ENCODE measurements at regions of chr3 and their contacts with region 1.

Region 1: DNA sequence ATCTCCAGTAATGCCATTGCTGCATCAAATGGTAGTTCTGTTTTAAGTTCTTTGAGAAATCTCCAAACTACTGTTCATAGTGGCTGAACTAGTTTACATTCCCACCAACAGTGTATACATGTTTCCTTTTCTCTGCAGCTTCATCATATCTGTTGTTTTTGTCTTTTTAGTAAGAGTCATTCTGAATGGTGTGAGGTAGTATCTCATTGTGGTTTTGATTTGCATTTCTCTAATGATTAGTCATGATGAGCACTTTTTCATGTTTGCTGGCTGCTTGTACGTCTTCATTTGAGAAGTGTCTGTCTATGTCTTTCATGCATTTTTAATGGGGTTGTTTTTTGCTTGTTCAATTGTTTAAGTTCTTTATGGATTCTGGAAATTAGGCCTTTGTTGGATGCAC is 10.2 kb upstream of the GCSAM start:
- DNase-seq: no peak
- H3K4me3 ChIP-seq: no peak overlapping the region
- H3K27ac ChIP-seq: no peak overlapping the region
- H3K4me1 ChIP-seq: peaks cover 17% of the 10 kb centered on the region
- CTCF ChIP-seq: no peak

Region 2: GRCh38 chr3:112280266-112280665 is 137.0 kb after region 1 on chr3:
- CTCF ChIA-PET with region 1: no interaction called
- POLR2A ChIA-PET with region 1: interaction called, 5 read pairs
- intact Hi-C with region 1: loop called (anchors 5 kb)
- DNase-seq: no peak
- H3K4me3 ChIP-seq: no peak overlapping the region
- H3K27ac ChIP-seq: no peak overlapping the region
- H3K4me1 ChIP-seq: no peaks in the 10 kb centered on the region
- CTCF ChIP-seq: no peak

Region 3: GRCh38 chr3:112333002-112333380 is 189.7 kb after region 1 on chr3 and contains the start of gene CD200:
- CTCF ChIA-PET with region 1: no interaction called
- POLR2A ChIA-PET with region 1: no interaction called
- intact Hi-C with region 1: no loop called
- DNase-seq: peak; percentile 12
- H3K4me3 ChIP-seq: peak within 1 kb of the TSS; percentile 57
- H3K27ac ChIP-seq: no peak within 1 kb of the TSS
- H3K4me1 ChIP-seq: no peaks in the 10 kb centered on the region
- CTCF ChIP-seq: no peak
- total RNA-seq, gene CD200: not detected in 2 replicates

Measured in OCI-LY7 (cell line).